ENCODE measurements at regions of chr18 and their contacts with region 1.

Region 1: DNA sequence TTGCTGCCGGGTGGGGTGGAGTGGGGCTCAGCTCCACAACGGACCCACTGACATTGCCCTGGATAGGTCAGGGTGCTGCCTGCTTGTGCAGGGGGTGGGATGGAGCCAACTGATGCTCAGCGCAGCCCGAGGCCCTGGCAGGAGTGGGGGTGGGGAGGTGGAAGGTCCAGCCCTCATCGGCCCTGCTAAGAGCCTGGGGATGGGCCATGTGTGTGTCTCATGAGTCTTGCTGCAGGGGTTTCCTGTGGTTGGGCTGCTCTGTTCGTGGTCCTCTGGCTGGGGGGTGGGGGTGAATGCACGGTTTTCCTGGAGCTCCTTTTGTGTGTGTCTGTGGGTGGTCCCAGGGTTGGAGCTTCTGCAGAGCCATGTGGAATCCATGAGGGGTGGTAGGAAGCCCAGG is 39.4 kb upstream of the GALR1 start:
- DNase-seq: no peak
- H3K4me3 ChIP-seq: no peak overlapping the region
- H3K27ac ChIP-seq: no peak overlapping the region
- H3K4me1 ChIP-seq: peaks cover 10 to 13% of the 10 kb centered on the region in 2 donors
- H3K27me3 ChIP-seq: no peaks in the 10 kb centered on the region
- CTCF ChIP-seq: no peak
- POLR2A ChIP-seq: no peak

Region 2: DNA sequence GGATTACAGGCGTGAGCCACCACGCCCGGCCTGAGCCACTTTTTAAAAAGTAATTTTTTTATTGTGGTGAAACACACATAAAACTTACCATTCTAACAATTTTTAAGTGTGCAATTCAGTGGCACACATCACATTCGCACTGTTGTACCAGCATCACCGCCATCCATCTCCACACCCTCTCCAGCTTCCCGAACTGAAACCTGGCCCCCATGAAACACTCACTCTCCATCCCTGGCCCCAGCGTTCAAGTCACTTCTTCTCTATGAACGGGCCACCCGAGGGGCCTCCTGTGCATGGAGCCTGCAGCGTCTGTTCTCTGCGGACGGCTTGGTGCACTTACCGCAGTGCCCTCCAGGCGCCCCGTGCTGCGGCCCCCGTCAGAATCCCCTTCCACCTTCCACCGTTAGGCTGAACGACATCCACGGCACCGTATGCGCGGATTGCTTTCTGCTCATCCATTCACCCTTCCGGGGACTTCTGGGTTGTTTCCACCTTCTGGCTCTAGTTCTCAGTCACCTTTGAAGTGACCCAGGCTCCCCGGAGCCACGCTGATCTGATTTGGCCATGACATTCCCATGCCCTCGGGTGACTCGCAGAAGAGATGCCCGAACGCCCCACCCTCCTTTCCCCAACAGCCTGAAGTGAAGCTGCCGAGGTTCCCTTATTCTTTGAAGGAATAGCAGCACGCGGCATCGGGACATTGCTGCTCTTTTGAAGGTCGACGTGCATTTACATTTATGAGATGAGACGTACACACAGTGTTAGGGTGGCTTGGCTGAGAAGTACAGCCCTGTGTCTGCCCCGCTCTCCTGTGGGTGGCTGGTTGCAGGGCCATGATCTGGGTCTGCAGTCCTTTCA is 212.1 kb before region 1 on chr18:
- intact Hi-C with region 1: loop called (anchors 5 kb)
- DNase-seq: no peak
- H3K4me3 ChIP-seq: no peak overlapping the region
- H3K27ac ChIP-seq: no peak overlapping the region
- H3K4me1 ChIP-seq: no peaks in the 10 kb centered on the region
- H3K27me3 ChIP-seq: no peaks in the 10 kb centered on the region
- CTCF ChIP-seq: no peak
- POLR2A ChIP-seq: no peak

Measured in uterus (tissue), 4 donors.